GM10248 (cell line): ENCODE measurements at regions of chrX and their contacts with region 1.

Region 1: DNA sequence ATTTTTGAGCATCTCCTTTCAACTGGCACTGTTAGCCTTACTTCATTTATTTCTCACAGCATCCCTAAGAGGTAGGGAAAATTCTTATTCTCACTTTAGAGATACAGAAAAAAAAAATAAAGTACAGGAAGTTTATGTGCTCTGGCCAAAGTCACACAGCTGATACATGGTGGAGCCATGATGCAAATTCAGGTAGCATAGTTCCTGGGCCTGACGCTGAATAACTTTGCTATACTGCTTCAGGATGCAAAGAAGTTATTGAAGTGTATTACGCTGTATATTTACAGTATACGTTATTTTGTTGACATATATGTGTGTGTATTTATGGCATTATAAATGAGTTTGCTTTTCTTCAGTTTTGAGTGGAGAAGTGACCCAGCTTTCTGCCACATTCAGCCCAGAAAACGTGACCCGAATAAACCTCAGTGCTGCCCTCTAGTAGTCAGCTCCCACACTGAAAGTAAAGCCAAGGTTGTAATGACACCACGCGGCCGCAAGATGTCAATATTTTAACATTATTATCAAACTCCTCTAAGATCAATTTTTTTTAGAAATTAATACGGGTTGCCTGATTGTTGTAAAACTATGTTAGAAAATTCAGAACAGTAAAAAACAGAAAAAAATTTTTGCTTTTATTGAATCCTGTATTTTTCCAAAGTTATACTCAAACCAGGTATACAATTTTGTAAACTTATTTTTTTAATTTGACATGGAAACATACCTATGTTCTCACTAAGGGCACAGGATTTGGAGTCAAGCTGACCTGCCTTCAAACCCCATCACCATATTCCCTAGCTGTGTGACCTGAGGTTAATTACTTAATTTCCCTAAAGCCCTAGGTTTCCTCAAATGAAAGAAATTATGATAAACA is 3.8 kb upstream of the GUCY2F start:
- DNase-seq: peak; percentile 25
- CTCF ChIP-seq: peak; percentile 69

Region 2: GRCh38 chrX:109600237-109600651 is 114.5 kb after region 1 on chrX:
- CTCF ChIA-PET with region 1: no interaction called
- POLR2A ChIA-PET with region 1: no interaction called
- DNase-seq: no peak
- CTCF ChIP-seq: no peak

Region 3: GRCh38 chrX:109635176-109635575 is 149.5 kb after region 1 on chrX:
- CTCF ChIA-PET with region 1: interaction called, 32 read pairs
- POLR2A ChIA-PET with region 1: no interaction called
- DNase-seq: no peak
- CTCF ChIP-seq: peak; percentile 21